H1 (cell line): ENCODE measurements at regions of chr3 and their contacts with region 1.

Region 1: DNA sequence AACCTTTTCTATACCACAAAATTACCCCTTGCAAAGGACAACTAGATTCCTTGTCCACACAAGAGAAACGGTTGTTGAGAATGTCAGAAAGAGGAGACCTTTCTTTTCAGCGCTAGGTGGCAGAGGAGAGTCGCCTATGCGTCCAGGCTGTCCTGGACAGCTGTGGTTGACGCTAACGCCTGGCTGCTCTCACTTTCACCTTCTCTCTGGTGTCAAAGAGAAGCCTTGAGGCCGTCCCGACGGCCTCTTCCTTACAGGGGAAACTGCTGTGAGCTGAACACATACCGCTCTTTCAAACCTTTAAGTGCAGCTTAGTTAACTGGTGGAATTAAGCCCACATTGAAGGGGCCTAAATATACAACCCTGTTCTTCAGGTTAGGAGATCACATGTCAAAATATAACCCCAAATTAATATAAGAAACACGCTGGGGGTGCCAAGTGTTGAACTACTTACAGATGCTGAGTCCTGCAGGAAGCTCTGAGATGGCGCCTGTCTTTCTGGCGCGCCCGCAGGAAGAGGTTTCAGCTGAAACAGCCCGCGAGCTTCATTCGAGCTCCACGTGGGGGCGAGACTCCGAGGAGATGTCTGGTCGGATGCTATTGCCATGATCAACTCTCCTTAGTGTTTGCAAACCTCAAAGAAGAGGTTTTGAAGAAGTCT is 26.1 kb upstream of the KBTBD8 start:
- DNase-seq: peak; percentile 74 to 80
- H3K4me3 ChIP-seq: no peak overlapping the region; a peak in 1 of 8 replicates
- H3K27ac ChIP-seq: no peak overlapping the region
- H3K4me1 ChIP-seq: peaks cover 0 to 6% (median 0%) of the 10 kb centered on the region in 4 experiments; a peak in 2 of 7 replicates
- H3K27me3 ChIP-seq: peaks cover 0 to 4% (median 0%) of the 10 kb centered on the region in 4 experiments; a peak in 1 of 7 replicates
- CTCF ChIP-seq: peak; percentile 75 to 91 (median 87)
- EP300 ChIP-seq: no peak
- POLR2A ChIP-seq: no peak
- RAD21 ChIP-seq: peak; percentile 92 to 97

Region 2: GRCh38 chr3:66885326-66886000 is 86.6 kb before region 1 on chr3:
- CTCF ChIA-PET with region 1: no interaction called
- POLR2A ChIA-PET with region 1: no interaction called
- DNase-seq: no peak
- H3K4me3 ChIP-seq: no peak overlapping the region
- H3K27ac ChIP-seq: no peak overlapping the region
- H3K4me1 ChIP-seq: peaks cover 0 to 8% (median 3%) of the 10 kb centered on the region in 4 experiments; a peak in 4 of 7 replicates
- H3K27me3 ChIP-seq: no peaks in the 10 kb centered on the region
- CTCF ChIP-seq: no peak
- EP300 ChIP-seq: no peak
- POLR2A ChIP-seq: no peak
- RAD21 ChIP-seq: no peak

Region 3: GRCh38 chr3:66938338-66938963 is 33.6 kb before region 1 on chr3:
- CTCF ChIA-PET with region 1: interaction called, 19 read pairs
- POLR2A ChIA-PET with region 1: interaction called, 3 read pairs
- DNase-seq: peak in 1 of 2 experiments; percentile 54
- H3K4me3 ChIP-seq: no peak overlapping the region
- H3K27ac ChIP-seq: no peak overlapping the region
- H3K4me1 ChIP-seq: peaks cover 3 to 11% (median 3%) of the 10 kb centered on the region in 4 experiments
- H3K27me3 ChIP-seq: no peaks in the 10 kb centered on the region
- CTCF ChIP-seq: peak in 2 of 3 experiments; percentile 76 to 82; a peak in 3 of 4 replicates
- EP300 ChIP-seq: no peak
- POLR2A ChIP-seq: no peak
- RAD21 ChIP-seq: peak; percentile 94 to 97

Region 4: DNA sequence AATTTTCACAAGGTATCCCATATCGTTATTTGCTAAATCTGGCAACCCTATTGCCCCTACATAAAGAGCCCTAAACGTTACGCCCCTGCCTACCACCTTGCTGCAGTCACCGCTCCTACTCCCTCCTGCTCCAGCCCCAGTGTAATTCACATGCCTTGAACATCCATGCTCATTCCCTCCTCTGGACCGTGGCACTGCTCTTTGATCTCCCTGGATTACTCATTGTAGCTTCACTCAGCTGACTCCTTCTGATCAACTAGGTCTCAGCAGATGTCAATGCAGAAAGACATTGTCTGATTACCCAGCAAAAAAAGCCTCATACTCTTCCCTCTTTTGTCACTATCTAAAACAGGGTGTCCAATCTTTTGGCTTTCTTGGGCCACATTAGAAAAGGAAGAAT is 14.7 kb before region 1 on chr3:
- CTCF ChIA-PET with region 1: interaction called, 28 read pairs
- POLR2A ChIA-PET with region 1: no interaction called
- DNase-seq: no peak
- H3K4me3 ChIP-seq: no peak overlapping the region
- H3K27ac ChIP-seq: no peak overlapping the region
- H3K4me1 ChIP-seq: peaks cover 0 to 3% (median 1%) of the 10 kb centered on the region in 4 experiments; a peak in 2 of 7 replicates
- H3K27me3 ChIP-seq: no peaks in the 10 kb centered on the region; a peak in 1 of 7 replicates
- CTCF ChIP-seq: no peak
- EP300 ChIP-seq: no peak
- POLR2A ChIP-seq: no peak
- RAD21 ChIP-seq: no peak

Region 5: DNA sequence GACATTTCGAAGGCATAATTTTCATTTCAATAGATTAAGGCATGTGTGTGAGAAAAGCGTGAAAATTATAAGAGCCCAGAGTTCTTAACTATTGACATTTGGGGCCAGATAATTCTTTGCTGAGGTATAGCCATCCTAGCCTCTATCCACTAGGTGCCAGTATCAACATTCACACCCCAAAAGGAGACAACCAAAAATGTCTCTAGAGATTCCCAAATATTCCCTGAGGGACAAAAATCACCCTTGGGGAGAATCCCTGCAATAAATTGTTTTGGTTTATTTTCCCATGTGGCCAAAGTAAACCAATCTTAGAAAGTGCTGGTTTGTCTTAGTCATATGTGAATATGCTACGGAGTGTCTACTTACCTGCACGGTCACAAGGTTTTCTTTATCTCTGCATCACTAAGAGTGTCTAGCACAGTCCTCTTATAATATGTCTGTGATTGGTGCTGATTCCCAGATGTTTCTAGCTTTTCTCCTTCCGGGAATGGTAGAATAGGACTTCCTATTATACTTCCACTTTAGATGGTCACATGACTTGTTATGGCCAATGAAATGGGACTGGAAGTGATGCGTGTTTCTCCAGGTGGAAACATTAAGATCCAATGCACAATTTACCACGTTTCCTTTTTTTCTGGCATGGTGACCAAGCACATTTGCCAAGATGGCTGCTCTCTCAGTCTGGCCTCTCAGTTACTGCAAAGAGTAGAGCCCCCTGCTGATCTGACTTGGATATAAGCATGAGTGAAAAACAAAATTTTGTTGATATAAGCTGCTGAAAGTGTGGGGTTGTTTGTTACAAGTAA is 18.0 kb after region 1 on chr3:
- CTCF ChIA-PET with region 1: interaction called, 72 read pairs
- POLR2A ChIA-PET with region 1: interaction called, 10 read pairs
- DNase-seq: no peak
- H3K4me3 ChIP-seq: peak overlapping the region in 1 of 4 experiments; percentile 42; a peak in 2 of 8 replicates
- H3K27ac ChIP-seq: no peak overlapping the region
- H3K4me1 ChIP-seq: peaks cover 5 to 13% (median 9%) of the 10 kb centered on the region in 4 experiments; a peak in 6 of 7 replicates
- H3K27me3 ChIP-seq: no peaks in the 10 kb centered on the region
- CTCF ChIP-seq: peak in 2 of 3 experiments; percentile 46 to 53; a peak in 3 of 4 replicates
- EP300 ChIP-seq: no peak
- POLR2A ChIP-seq: no peak
- RAD21 ChIP-seq: peak; percentile 74 to 80

Region 6: GRCh38 chr3:67006460-67006859 is 34.4 kb after region 1 on chr3:
- CTCF ChIA-PET with region 1: interaction called, 11 read pairs
- POLR2A ChIA-PET with region 1: no interaction called
- DNase-seq: no peak
- H3K4me3 ChIP-seq: no peak overlapping the region
- H3K27ac ChIP-seq: no peak overlapping the region
- H3K4me1 ChIP-seq: peaks cover 0 to 6% (median under 1%) of the 10 kb centered on the region in 4 experiments; a peak in 2 of 7 replicates
- H3K27me3 ChIP-seq: no peaks in the 10 kb centered on the region
- CTCF ChIP-seq: no peak
- EP300 ChIP-seq: no peak
- POLR2A ChIP-seq: no peak
- RAD21 ChIP-seq: no peak

Region 7: DNA sequence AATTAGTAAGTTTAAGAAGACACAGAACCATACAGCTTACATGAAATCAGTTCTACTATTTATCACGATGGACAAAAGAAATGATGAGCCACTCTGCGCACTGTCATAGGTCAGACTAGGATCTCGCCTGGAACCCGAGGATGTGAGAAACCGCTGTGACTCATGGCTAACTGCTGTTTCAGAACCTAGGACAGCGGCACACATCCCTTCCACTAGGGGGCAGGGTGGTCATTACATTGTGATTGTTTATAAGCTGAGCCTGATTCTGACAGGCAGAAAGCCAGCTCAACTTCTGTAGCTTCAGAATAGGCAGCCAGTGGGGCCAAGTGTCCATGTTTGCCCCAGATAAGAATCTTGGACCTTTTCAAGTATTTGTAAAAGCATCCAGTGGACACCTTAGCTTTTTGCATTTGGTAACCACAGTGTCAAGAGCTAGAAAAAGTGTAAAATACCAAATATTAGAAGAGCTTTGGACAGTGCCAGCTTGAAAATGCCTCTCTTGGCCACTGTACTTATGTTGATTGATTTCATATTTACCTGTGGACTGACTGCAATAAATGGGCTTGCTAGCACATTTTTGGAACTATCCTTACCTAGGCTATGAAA is 141.9 kb after region 1 on chr3:
- CTCF ChIA-PET with region 1: interaction called, 28 read pairs
- POLR2A ChIA-PET with region 1: interaction called, 3 read pairs
- DNase-seq: peak; percentile 70 to 93
- H3K4me3 ChIP-seq: no peak overlapping the region
- H3K27ac ChIP-seq: no peak overlapping the region
- H3K4me1 ChIP-seq: peaks cover 0 to 3% (median 0%) of the 10 kb centered on the region in 4 experiments; a peak in 2 of 7 replicates
- H3K27me3 ChIP-seq: no peaks in the 10 kb centered on the region
- CTCF ChIP-seq: peak; percentile 89 to 99 (median 94)
- EP300 ChIP-seq: no peak
- POLR2A ChIP-seq: no peak
- RAD21 ChIP-seq: peak; percentile 96 to 97

Region 8: GRCh38 chr3:67384760-67385397 is 412.9 kb after region 1 on chr3:
- CTCF ChIA-PET with region 1: interaction called, 28 read pairs
- POLR2A ChIA-PET with region 1: no interaction called
- DNase-seq: peak; percentile 43 to 83
- H3K4me3 ChIP-seq: no peak overlapping the region
- H3K27ac ChIP-seq: no peak overlapping the region
- H3K4me1 ChIP-seq: peaks cover 0 to 8% (median 4%) of the 10 kb centered on the region in 4 experiments; a peak in 2 of 7 replicates
- H3K27me3 ChIP-seq: no peaks in the 10 kb centered on the region
- CTCF ChIP-seq: peak; percentile 77 to 95 (median 78)
- EP300 ChIP-seq: no peak
- POLR2A ChIP-seq: no peak
- RAD21 ChIP-seq: peak; percentile 81 to 85